SK-N-SH (cell line): ENCODE measurements at regions of chr5 and their contacts with region 1.

Region 1: GRCh38 chr5:128905571-128906110 is 59.6 kb upstream of the SLC27A6 start:
- DNase-seq: peak; percentile 29
- H3K4me3 ChIP-seq: no peak overlapping the region; a peak in 1 of 4 replicates
- H3K27ac ChIP-seq: no peak overlapping the region
- H3K4me1 ChIP-seq: no peaks in the 10 kb centered on the region; a peak in 1 of 4 replicates
- H3K27me3 ChIP-seq: no peaks in the 10 kb centered on the region
- CTCF ChIP-seq: peak; percentile 93
- EP300 ChIP-seq: no peak
- RAD21 ChIP-seq: peak; percentile 96

Region 2: GRCh38 chr5:128924299-128924698 is 18.7 kb after region 1 on chr5:
- CTCF ChIA-PET with region 1: interaction called, 17 read pairs
- POLR2A ChIA-PET with region 1: no interaction called
- DNase-seq: no peak
- H3K4me3 ChIP-seq: no peak overlapping the region
- H3K27ac ChIP-seq: no peak overlapping the region
- H3K4me1 ChIP-seq: no peaks in the 10 kb centered on the region
- H3K27me3 ChIP-seq: no peaks in the 10 kb centered on the region
- CTCF ChIP-seq: no peak
- EP300 ChIP-seq: no peak
- RAD21 ChIP-seq: no peak

Region 3: DNA sequence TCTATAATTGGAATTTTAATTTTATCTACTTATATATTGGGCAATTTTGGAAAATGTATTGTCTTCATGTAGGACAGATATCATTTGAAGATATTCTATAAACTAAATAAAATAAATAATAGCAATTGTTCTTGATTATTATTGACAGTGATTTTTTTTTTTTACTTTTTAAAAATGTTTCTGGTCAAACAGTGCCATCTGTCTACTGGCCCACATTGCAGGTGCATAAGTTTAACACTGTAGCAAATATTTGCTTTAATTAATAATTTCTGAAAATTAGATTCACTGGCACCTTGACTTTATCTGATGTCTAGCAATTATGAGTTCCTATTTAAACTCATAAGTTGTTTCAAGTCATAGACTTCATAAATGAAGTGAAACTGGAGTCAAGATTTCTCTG is 147.8 kb after region 1 on chr5:
- CTCF ChIA-PET with region 1: interaction called, 20 read pairs
- POLR2A ChIA-PET with region 1: no interaction called
- DNase-seq: no peak
- H3K4me3 ChIP-seq: no peak overlapping the region
- H3K27ac ChIP-seq: no peak overlapping the region
- H3K4me1 ChIP-seq: peaks cover 0 to 4% of the 10 kb centered on the region in 2 experiments; a peak in 2 of 4 replicates
- H3K27me3 ChIP-seq: no peaks in the 10 kb centered on the region
- CTCF ChIP-seq: no peak
- EP300 ChIP-seq: no peak
- RAD21 ChIP-seq: peak; percentile 57

Region 4: GRCh38 chr5:129069292-129069691 is 163.7 kb after region 1 on chr5:
- CTCF ChIA-PET with region 1: interaction called, 11 read pairs
- POLR2A ChIA-PET with region 1: no interaction called
- DNase-seq: no peak
- H3K4me3 ChIP-seq: no peak overlapping the region
- H3K27ac ChIP-seq: peak overlapping the region in 1 of 2 experiments; percentile 6; a peak in 1 of 4 replicates
- H3K4me1 ChIP-seq: peaks cover 0 to 4% of the 10 kb centered on the region in 2 experiments; a peak in 2 of 4 replicates
- H3K27me3 ChIP-seq: no peaks in the 10 kb centered on the region
- CTCF ChIP-seq: no peak
- EP300 ChIP-seq: no peak
- RAD21 ChIP-seq: no peak

Region 5: DNA sequence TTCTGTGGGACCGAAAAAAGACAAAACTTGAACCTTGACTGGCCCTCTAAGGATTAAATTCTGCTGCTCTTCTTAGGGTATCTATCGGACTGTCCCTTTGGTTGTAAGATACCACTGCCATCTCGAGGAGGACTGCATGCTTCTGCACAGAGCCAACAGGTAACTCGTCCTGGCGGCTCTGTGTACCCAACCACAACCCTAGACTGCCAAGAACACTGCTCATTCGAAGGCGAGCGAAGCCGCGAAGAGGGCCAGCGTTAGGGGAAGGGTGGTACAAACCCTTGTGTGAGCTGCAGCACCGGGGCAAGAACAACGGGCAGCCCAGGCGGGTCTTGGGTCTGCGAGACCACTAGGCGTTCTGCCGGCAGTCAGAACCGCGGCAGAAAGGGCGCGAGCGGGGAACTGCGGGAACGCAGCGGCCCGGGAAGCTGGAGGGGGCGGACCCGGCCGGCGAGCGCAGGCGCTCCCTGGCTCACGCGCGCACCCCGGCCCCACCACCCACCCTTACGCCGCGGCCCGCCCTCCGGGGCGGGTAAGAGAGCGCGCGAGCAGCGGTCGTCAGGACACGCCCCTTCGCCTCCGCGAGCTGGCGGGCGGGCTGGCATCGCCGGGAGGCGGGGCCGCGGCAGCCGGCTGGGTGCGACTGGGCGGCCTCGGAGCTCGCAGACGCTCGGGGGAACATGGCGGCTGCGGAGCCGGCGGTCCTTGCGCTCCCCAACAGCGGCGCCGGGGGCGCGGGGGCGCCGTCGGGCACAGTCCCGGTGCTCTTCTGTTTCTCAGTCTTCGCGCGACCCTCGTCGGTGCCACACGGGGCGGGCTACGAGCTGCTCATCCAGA is 188.7 kb after region 1 on chr5 and contains the start of gene ISOC1:
- CTCF ChIA-PET with region 1: interaction called, 54 read pairs
- POLR2A ChIA-PET with region 1: interaction called, 3 read pairs
- DNase-seq: peak; percentile 97
- H3K4me3 ChIP-seq: peak within 1 kb of the TSS; percentile 86 to 98
- H3K27ac ChIP-seq: peak within 1 kb of the TSS; percentile 44 to 93; a peak in 3 of 4 replicates
- H3K4me1 ChIP-seq: peaks cover 0 to 29% of the 10 kb centered on the region in 2 experiments; a peak in 3 of 4 replicates
- H3K27me3 ChIP-seq: no peaks in the 10 kb centered on the region
- CTCF ChIP-seq: no peak
- EP300 ChIP-seq: no peak
- RAD21 ChIP-seq: peak; percentile 60
- polyA plus RNA-seq, gene ISOC1: 20.6 and 26.2 TPM in 2 replicates

Region 6: GRCh38 chr5:129125810-129126209 is 220.2 kb after region 1 on chr5:
- CTCF ChIA-PET with region 1: interaction called, 23 read pairs
- POLR2A ChIA-PET with region 1: no interaction called
- DNase-seq: no peak
- H3K4me3 ChIP-seq: no peak overlapping the region
- H3K27ac ChIP-seq: no peak overlapping the region
- H3K4me1 ChIP-seq: peaks cover 0 to 10% of the 10 kb centered on the region in 2 experiments; a peak in 2 of 4 replicates
- H3K27me3 ChIP-seq: no peaks in the 10 kb centered on the region
- CTCF ChIP-seq: no peak
- EP300 ChIP-seq: no peak
- RAD21 ChIP-seq: no peak